ENCODE measurements at regions of chr13 and their contacts with region 1.

Region 1: DNA sequence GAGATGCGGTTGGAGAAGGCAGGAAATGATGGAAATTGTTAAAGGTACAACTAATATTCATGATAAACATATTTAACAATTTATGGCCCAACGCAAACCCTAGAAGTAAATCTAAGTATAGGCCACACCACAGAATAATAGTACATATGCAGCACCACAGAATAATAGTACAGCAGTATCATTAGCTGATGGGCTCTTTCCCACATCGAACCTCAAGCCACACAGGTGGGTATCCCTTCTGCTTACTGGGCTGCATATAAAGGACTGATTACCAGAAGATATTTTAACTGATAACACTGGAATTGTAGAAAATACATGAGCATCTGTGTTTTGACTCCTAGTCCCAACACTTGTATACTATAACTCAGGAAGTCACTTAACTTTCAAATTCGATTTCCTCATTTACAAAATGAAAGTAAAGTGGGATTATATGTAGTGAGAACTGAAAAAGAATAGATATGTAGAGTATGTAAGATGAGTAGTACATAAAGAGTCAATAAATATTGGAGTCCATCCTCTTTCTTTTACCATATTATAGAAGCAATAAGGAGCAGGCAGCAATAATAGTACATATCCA is 91.5 kb downstream of the TSC22D1 start:
- DNase-seq: peak in 2 of 14 experiments; percentile 6 to 29
- ATAC-seq: no peak
- H3K4me3 ChIP-seq: peak overlapping the region; percentile 1
- H3K4me3 Mint-ChIP-seq: no peak overlapping the region
- H3K27ac ChIP-seq: no peak overlapping the region
- H3K27ac Mint-ChIP-seq: no peak overlapping the region
- H3K4me1 ChIP-seq: no peaks in the 10 kb centered on the region
- H3K4me1 Mint-ChIP-seq: peaks cover 23% of the 10 kb centered on the region
- H3K27me3 ChIP-seq: no peaks in the 10 kb centered on the region
- H3K27me3 Mint-ChIP-seq: no peaks in the 10 kb centered on the region
- CTCF ChIP-seq: no peak

Region 2: DNA sequence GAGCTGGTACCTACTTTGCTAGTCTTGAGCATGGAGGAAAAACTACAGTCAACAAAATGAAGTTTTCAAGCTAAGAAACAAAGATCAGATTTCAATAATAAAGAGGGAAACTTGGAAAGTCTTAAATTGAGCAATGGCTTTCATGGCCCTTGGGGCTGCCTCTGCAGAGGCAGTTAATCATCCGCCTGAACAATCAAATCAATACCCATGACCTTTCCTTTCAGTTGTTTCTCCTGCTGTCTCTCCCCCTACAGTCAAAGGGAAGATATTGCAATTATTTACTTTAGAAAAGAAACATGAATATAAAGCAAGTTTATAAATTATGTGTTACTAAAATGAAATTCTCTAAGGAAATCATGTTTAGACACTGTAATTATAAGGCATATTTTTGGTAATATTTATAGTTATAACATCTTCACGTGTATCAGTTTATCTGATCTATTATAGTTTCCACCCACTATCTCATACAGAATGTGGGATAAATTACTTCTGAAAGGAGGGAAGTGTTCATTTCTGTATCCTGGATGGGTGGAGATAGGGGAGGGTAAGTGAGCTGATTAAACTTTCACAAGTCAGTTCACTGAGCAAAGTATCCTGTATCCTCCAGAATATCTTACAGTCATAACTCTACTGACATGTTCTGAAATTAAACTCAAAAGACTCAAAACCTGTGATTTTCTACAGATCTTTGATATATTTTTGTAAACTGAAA is 163.9 kb after region 1 on chr13:
- CTCF ChIA-PET with region 1: interaction called, 3 read pairs
- POLR2A ChIA-PET with region 1: no interaction called
- intact Hi-C with region 1: loop called (anchors 1 to 2 kb)
- DNase-seq: peak in 3 of 14 experiments; percentile 4 to 16 (median 11)
- ATAC-seq: no peak
- H3K4me3 ChIP-seq: no peak overlapping the region
- H3K4me3 Mint-ChIP-seq: no peak overlapping the region
- H3K27ac ChIP-seq: no peak overlapping the region
- H3K27ac Mint-ChIP-seq: no peak overlapping the region
- H3K4me1 ChIP-seq: no peaks in the 10 kb centered on the region
- H3K4me1 Mint-ChIP-seq: no peaks in the 10 kb centered on the region
- H3K27me3 ChIP-seq: peaks cover 0 to 4% of the 10 kb centered on the region in 2 experiments
- H3K27me3 Mint-ChIP-seq: peaks cover 9% of the 10 kb centered on the region
- CTCF ChIP-seq: peak; percentile 52

Region 3: GRCh38 chr13:44815623-44816022 is 331.0 kb after region 1 on chr13:
- CTCF ChIA-PET with region 1: no interaction called
- POLR2A ChIA-PET with region 1: no interaction called
- intact Hi-C with region 1: loop called in 1 of 2 experiments (anchors 10 kb)
- DNase-seq: no peak
- ATAC-seq: no peak
- H3K4me3 ChIP-seq: no peak overlapping the region
- H3K4me3 Mint-ChIP-seq: no peak overlapping the region
- H3K27ac ChIP-seq: no peak overlapping the region
- H3K27ac Mint-ChIP-seq: no peak overlapping the region
- H3K4me1 ChIP-seq: no peaks in the 10 kb centered on the region
- H3K4me1 Mint-ChIP-seq: no peaks in the 10 kb centered on the region
- H3K27me3 ChIP-seq: no peaks in the 10 kb centered on the region
- H3K27me3 Mint-ChIP-seq: no peaks in the 10 kb centered on the region
- CTCF ChIP-seq: no peak

Region 4: DNA sequence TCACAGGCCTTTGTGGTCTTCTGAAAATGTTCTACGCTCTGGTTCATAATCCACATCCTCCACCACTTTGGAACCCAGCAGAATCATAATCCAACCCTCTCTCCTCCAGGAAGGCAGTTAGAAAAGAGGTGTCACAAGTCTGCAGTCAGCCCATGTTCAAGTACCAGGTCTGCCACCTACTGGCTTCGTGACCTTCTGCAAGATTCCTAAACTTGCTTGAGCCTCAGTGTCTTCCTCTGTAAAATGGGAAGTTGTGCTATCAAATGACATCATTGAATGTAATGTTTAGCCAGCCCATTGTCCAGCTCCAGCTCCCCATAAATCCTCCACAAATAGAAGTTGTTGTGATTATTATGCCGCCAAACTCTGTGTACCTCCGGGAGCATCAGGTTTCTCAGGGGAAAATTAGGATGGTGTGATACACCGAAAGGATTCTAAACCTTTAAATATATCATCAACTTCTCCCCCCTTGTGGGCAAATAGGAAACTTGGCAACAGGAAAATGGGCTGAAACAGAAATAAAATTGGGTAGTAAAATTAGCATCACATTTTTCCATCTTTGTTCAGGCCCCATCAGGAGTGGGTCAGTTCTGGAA is 394.9 kb after region 1 on chr13:
- CTCF ChIA-PET with region 1: no interaction called
- POLR2A ChIA-PET with region 1: no interaction called
- intact Hi-C with region 1: loop called (anchors 2 to 5 kb)
- DNase-seq: peak in 4 of 14 experiments; percentile 7 to 36 (median 16)
- ATAC-seq: no peak
- H3K4me3 ChIP-seq: no peak overlapping the region
- H3K4me3 Mint-ChIP-seq: no peak overlapping the region
- H3K27ac ChIP-seq: no peak overlapping the region
- H3K27ac Mint-ChIP-seq: no peak overlapping the region
- H3K4me1 ChIP-seq: no peaks in the 10 kb centered on the region
- H3K4me1 Mint-ChIP-seq: no peaks in the 10 kb centered on the region
- H3K27me3 ChIP-seq: peaks cover 0 to 2% of the 10 kb centered on the region in 2 experiments
- H3K27me3 Mint-ChIP-seq: no peaks in the 10 kb centered on the region
- CTCF ChIP-seq: no peak

Region 5: DNA sequence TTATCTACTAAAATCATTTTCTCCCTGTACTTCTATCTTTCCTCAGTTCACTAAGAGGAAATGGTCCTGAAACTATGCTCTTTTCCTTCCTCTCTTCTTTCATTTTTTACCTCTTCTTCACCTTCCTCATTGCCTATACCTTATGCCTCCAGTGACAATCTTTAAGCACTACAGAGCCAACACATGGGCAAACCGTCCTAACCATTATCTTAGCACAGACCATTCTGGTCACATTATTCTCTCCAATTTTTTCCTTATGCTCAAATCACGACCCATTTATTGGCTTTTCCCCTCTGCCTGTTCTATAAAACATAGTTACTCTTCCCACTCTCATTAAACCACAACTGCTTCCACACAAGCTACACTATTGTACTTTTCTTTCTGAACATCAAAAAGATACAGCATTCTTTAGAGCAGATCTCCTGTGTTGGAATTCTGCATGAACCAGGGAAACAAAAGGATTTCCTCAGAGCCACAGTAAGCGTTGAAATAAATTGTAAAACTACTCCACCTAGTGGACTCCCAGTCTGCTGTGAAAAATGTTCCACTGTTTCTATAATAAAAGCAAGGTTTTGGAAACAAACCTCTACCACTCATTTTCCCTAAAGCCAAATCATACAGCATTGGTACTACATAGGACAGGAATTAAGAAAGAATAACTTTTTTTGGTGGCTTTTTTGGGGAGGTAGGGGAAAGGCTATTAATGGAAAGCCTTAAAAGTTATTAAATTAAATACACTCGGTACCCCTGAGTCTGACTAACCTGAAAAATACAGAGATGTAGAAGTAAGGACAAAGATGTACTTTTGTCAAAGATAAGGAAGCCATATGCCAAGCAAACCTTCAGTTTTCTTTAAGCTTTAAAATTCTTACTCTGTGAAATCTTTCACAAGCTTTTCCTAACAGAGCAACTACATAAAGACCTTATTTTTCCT is 485.2 kb after region 1 on chr13:
- CTCF ChIA-PET with region 1: interaction called, 3 read pairs
- POLR2A ChIA-PET with region 1: no interaction called
- intact Hi-C with region 1: loop called (anchors 1 kb)
- DNase-seq: peak in 4 of 14 experiments; percentile 5 to 47 (median 42)
- ATAC-seq: no peak
- H3K4me3 ChIP-seq: no peak overlapping the region
- H3K4me3 Mint-ChIP-seq: no peak overlapping the region
- H3K27ac ChIP-seq: no peak overlapping the region
- H3K27ac Mint-ChIP-seq: no peak overlapping the region
- H3K4me1 ChIP-seq: no peaks in the 10 kb centered on the region
- H3K4me1 Mint-ChIP-seq: no peaks in the 10 kb centered on the region
- H3K27me3 ChIP-seq: no peaks in the 10 kb centered on the region
- H3K27me3 Mint-ChIP-seq: no peaks in the 10 kb centered on the region
- CTCF ChIP-seq: peak; percentile 66

Region 6: GRCh38 chr13:45297456-45298205 is 813.0 kb after region 1 on chr13:
- CTCF ChIA-PET with region 1: no interaction called
- POLR2A ChIA-PET with region 1: no interaction called
- intact Hi-C with region 1: loop called in 1 of 2 experiments (anchors 10 kb)
- DNase-seq: peak in 4 of 14 experiments; percentile 8 to 54 (median 48)
- ATAC-seq: peak; percentile 86
- H3K4me3 ChIP-seq: no peak overlapping the region
- H3K4me3 Mint-ChIP-seq: peak overlapping the region; percentile 23
- H3K27ac ChIP-seq: peak overlapping the region; percentile 44 to 53
- H3K27ac Mint-ChIP-seq: peak overlapping the region; percentile 76
- H3K4me1 ChIP-seq: peaks cover 33% of the 10 kb centered on the region
- H3K4me1 Mint-ChIP-seq: peaks cover 44% of the 10 kb centered on the region
- H3K27me3 ChIP-seq: no peaks in the 10 kb centered on the region
- H3K27me3 Mint-ChIP-seq: peaks cover 2% of the 10 kb centered on the region
- CTCF ChIP-seq: no peak